ENCODE measurements at regions of chr10 and their contacts with region 1.

Region 1: GRCh38 chr10:71835671-71836595 is 15.1 kb downstream of the PSAP start:
- DNase-seq: peak; percentile 83 to 89 (median 86)
- ATAC-seq: peak; percentile 57 to 67
- H3K4me3 ChIP-seq: no peak overlapping the region
- H3K27ac ChIP-seq: peak overlapping the region; percentile 86
- H3K4me1 ChIP-seq: peaks cover 32% of the 10 kb centered on the region
- H3K27me3 ChIP-seq: no peaks in the 10 kb centered on the region

Region 2: DNA sequence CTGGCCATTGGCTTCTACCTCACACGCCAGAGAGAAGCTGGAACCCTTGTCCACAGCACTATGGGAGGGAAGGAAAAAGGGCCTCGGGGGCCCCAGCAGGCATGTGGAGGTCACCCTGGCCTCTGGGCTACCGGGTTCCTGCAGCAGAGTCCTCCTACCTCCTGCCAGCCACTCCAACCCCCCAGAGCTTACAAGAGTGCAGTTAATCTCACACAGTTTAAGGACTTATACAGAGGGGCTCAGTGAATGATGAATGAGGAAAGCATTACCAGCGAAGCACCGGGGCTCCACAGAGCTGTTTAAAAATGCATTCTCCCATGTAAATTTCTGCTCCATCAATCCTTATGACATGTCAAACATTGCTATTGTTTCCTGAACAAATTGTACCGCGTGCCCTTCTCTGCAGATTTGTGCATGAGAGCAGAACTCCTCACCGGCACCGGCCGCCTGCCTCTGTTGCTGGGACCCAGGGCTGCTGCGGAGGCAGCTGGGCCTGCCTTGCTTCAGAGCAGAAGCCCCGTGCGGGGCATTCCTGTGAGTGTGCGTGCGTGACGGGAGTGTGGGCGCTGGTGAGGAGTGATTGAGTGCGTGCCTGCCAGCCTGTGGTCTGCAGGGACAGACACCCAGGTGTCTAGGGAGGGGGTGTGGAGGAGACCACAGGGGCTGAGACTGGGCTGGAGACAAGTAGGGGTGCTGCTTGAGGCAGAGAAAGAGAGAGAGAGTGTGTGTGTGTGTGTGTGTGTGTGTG is 169.1 kb before region 1 on chr10:
- intact Hi-C with region 1: no loop called
- DNase-seq: no peak
- ATAC-seq: no peak
- H3K4me3 ChIP-seq: no peak overlapping the region
- H3K27ac ChIP-seq: no peak overlapping the region
- H3K4me1 ChIP-seq: no peaks in the 10 kb centered on the region
- H3K27me3 ChIP-seq: no peaks in the 10 kb centered on the region

Region 3: GRCh38 chr10:71893920-71894319 is 58.0 kb after region 1 on chr10:
- intact Hi-C with region 1: loop called in 3 of 4 experiments (anchors 10 kb)
- DNase-seq: no peak
- ATAC-seq: no peak
- H3K4me3 ChIP-seq: no peak overlapping the region
- H3K27ac ChIP-seq: no peak overlapping the region
- H3K4me1 ChIP-seq: peaks cover 3% of the 10 kb centered on the region
- H3K27me3 ChIP-seq: no peaks in the 10 kb centered on the region

Measured in right cardiac atrium (tissue), 5 donors.